ENCODE measurements at regions of chr7 and their contacts with region 1.

Region 1: GRCh38 chr7:40986351-40986873 is 716.5 kb downstream of the INHBA start:
- DNase-seq: peak; percentile 98
- ATAC-seq: peak; percentile 92
- H3K4me3 ChIP-seq: no peak overlapping the region
- H3K27ac ChIP-seq: no peak overlapping the region
- H3K4me1 ChIP-seq: peaks cover 8% of the 10 kb centered on the region
- H3K27me3 ChIP-seq: no peaks in the 10 kb centered on the region
- CTCF ChIP-seq: no peak
- POLR2A ChIP-seq: no peak
- RAD21 ChIP-seq: no peak; the same call in 1 of the 2 replicates

Region 2: DNA sequence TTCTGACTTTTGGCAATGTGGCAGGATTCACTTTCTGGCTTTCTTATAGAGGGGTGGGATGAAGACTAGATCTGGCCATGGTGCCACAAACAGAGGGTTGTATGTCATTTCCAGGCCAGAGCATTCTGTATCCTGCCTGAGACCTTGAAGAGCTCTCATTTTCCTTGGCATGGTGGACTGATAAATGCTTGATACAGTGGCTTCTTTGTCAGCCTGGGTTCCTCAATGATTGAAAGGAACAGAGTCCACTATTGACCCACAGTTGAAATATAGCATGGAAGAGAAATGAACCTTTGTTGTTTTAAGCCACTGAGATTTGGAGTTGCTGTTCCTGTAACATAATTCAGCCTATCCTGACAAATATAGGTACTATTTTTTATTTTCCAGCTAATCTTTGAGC is 388.9 kb before region 1 on chr7:
- CTCF ChIA-PET with region 1: no interaction called
- POLR2A ChIA-PET with region 1: no interaction called
- dilution Hi-C with region 1: no loop called
- in situ Hi-C with region 1: no loop called
- intact Hi-C with region 1: no loop called
- DNase-seq: no peak
- ATAC-seq: no peak
- H3K4me3 ChIP-seq: no peak overlapping the region
- H3K27ac ChIP-seq: no peak overlapping the region
- H3K4me1 ChIP-seq: no peaks in the 10 kb centered on the region
- H3K27me3 ChIP-seq: no peaks in the 10 kb centered on the region
- CTCF ChIP-seq: no peak
- POLR2A ChIP-seq: no peak
- RAD21 ChIP-seq: no peak

Region 3: GRCh38 chr7:40918701-40919271 is 67.6 kb before region 1 on chr7:
- CTCF ChIA-PET with region 1: no interaction called
- POLR2A ChIA-PET with region 1: no interaction called
- dilution Hi-C with region 1: no loop called
- in situ Hi-C with region 1: no loop called
- intact Hi-C with region 1: loop called (anchors 1 kb)
- DNase-seq: peak; percentile 93
- ATAC-seq: peak; percentile 88
- H3K4me3 ChIP-seq: no peak overlapping the region
- H3K27ac ChIP-seq: peak overlapping the region; percentile 79
- H3K4me1 ChIP-seq: peaks cover 17% of the 10 kb centered on the region
- H3K27me3 ChIP-seq: no peaks in the 10 kb centered on the region
- CTCF ChIP-seq: no peak
- POLR2A ChIP-seq: no peak
- RAD21 ChIP-seq: no peak

Region 4: GRCh38 chr7:41459623-41460261 is 473.3 kb after region 1 on chr7:
- CTCF ChIA-PET with region 1: no interaction called
- POLR2A ChIA-PET with region 1: no interaction called
- dilution Hi-C with region 1: no loop called
- in situ Hi-C with region 1: no loop called
- intact Hi-C with region 1: no loop called
- DNase-seq: no peak
- ATAC-seq: no peak
- H3K4me3 ChIP-seq: no peak overlapping the region
- H3K27ac ChIP-seq: no peak overlapping the region
- H3K4me1 ChIP-seq: peaks cover 2% of the 10 kb centered on the region
- H3K27me3 ChIP-seq: no peaks in the 10 kb centered on the region
- CTCF ChIP-seq: no peak
- POLR2A ChIP-seq: no peak
- RAD21 ChIP-seq: no peak

Measured in IMR-90 (cell line).